Cardiac septum (tissue), 1 donor: ENCODE measurements at regions of chr15 and their contacts with region 1.

Region 1: GRCh38 chr15:98779463-98780071 is 131.2 kb downstream of the IGF1R start:
- DNase-seq: peak; percentile 90

Region 2: GRCh38 chr15:98530570-98530969 is 249.0 kb before region 1 on chr15:
- intact Hi-C with region 1: no loop called
- DNase-seq: no peak

Region 3: GRCh38 chr15:98719137-98719740 is 60.3 kb before region 1 on chr15:
- intact Hi-C with region 1: loop called (anchors 2 kb)
- DNase-seq: no peak

Region 4: DNA sequence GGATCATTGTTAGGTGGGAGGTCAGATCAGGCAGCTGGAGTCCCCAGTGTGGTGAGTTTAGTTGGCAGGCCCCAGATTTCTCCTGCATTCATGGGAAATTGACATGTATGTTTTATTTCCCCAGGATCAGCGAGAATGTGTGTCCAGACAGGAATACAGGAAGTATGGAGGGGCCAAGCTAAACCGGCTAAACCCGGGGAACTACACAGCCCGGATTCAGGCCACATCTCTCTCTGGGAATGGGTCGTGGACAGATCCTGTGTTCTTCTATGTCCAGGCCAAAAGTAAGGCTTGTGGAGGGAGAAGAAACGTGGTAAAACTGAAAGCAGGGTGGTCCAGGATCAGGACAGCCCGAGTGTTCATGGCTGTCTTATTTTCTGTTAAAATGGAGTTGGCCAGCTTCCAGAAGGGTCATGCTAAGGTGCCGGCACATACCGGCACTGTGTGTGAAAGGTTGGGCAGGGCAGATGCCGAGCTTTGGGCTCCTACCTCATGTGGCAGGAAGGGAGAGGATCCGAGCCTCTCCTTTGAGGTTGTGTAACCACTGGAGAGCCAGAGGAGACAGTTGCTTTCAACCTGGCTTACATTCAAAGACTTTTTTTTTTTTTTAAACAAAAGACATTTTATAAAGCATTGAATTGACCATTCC is 145.0 kb after region 1 on chr15:
- intact Hi-C with region 1: no loop called
- DNase-seq: no peak